ENCODE measurements at regions of chr10 and their contacts with region 1.

Region 1: GRCh38 chr10:30915146-30915545 is 116.5 kb downstream of the ZNF438 start:
- DNase-seq: no peak
- H3K4me3 ChIP-seq: no peak overlapping the region
- H3K27ac ChIP-seq: no peak overlapping the region
- H3K4me1 ChIP-seq: no peaks in the 10 kb centered on the region
- H3K27me3 ChIP-seq: no peaks in the 10 kb centered on the region
- CTCF ChIP-seq: no peak
- EP300 ChIP-seq: no peak
- POLR2A ChIP-seq: no peak

Region 2: DNA sequence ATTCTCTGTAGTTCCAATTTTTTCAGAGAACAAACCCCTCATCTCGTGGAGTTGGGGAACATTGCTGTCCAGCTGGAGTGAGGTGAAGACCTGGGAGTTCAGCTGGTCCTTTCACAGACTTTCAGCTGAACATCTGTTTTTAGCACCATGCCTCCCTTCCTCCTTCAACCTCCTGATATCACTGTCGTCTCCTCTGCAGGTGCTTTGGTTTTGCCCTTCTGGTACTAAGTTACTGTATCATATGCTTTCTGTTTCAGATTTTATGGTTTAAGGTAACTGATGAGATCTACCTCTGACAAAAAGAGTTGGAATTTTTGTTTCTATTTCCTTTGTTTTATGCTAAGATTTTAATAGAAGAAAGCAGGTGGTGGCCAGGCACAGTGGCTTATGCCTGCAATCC is 13.6 kb after region 1 on chr10:
- in situ Hi-C with region 1: no loop called
- intact Hi-C with region 1: loop called (anchors 1 kb)
- DNase-seq: no peak
- H3K4me3 ChIP-seq: no peak overlapping the region
- H3K27ac ChIP-seq: no peak overlapping the region
- H3K4me1 ChIP-seq: no peaks in the 10 kb centered on the region
- H3K27me3 ChIP-seq: no peaks in the 10 kb centered on the region
- CTCF ChIP-seq: no peak
- EP300 ChIP-seq: no peak
- POLR2A ChIP-seq: no peak

Region 3: GRCh38 chr10:30967650-30968410 is 52.7 kb after region 1 on chr10:
- in situ Hi-C with region 1: no loop called
- intact Hi-C with region 1: no loop called
- DNase-seq: no peak
- H3K4me3 ChIP-seq: no peak overlapping the region
- H3K27ac ChIP-seq: peak overlapping the region in 2 of 4 donors; percentile 36 to 43
- H3K4me1 ChIP-seq: peaks cover 0 to 7% (median 3%) of the 10 kb centered on the region in 4 donors
- H3K27me3 ChIP-seq: no peaks in the 10 kb centered on the region
- CTCF ChIP-seq: no peak
- EP300 ChIP-seq: no peak
- POLR2A ChIP-seq: no peak